ENCODE measurements at regions of chr16 and their contacts with region 1.

Region 1: DNA sequence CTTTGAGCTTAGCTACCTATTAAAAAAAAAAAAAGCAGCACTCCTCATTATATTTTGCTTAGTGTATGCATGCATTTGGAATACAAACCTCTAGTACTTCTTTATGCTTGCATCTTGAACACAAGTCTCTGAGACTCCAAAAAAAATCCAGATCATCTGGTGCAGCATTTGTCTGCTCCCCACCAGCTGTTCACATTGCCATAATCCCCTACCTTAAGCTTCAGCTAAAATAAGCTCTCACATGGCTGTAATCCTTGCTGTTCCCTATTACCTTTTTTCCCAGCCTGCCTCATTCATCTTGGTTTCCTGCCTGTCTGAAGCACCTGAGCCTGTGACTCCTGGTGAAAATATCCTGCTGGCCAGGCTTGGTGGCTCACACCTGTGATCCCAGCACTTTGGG is 7.5 kb upstream of the NFATC2IP start:
- DNase-seq: no peak
- ATAC-seq: no peak
- H3K4me3 ChIP-seq: no peak overlapping the region
- H3K4me3 Mint-ChIP-seq: no peak overlapping the region
- H3K27ac ChIP-seq: no peak overlapping the region
- H3K27ac Mint-ChIP-seq: no peak overlapping the region
- H3K4me1 ChIP-seq: peaks cover 6% of the 10 kb centered on the region
- H3K4me1 Mint-ChIP-seq: peaks cover 7% of the 10 kb centered on the region
- H3K27me3 ChIP-seq: no peaks in the 10 kb centered on the region
- H3K27me3 Mint-ChIP-seq: no peaks in the 10 kb centered on the region
- CTCF ChIP-seq: no peak

Region 2: GRCh38 chr16:28553776-28554633 is 389.3 kb before region 1 on chr16 and contains the start of gene SGF29:
- CTCF ChIA-PET with region 1: no interaction called
- POLR2A ChIA-PET with region 1: no interaction called
- intact Hi-C with region 1: loop called in 1 of 2 experiments (anchors 2 kb)
- DNase-seq: peak; percentile 86 to 97 (median 93)
- ATAC-seq: peak; percentile 93
- H3K4me3 ChIP-seq: peak within 1 kb of the TSS; percentile 87 to 99
- H3K4me3 Mint-ChIP-seq: peak within 1 kb of the TSS; percentile 92
- H3K27ac ChIP-seq: peak within 1 kb of the TSS; percentile 95 to 98
- H3K27ac Mint-ChIP-seq: peak within 1 kb of the TSS; percentile 98
- H3K4me1 ChIP-seq: peaks cover 18% of the 10 kb centered on the region
- H3K4me1 Mint-ChIP-seq: peaks cover 36% of the 10 kb centered on the region
- H3K27me3 ChIP-seq: no peaks in the 10 kb centered on the region
- H3K27me3 Mint-ChIP-seq: no peaks in the 10 kb centered on the region
- CTCF ChIP-seq: no peak
- total RNA-seq, gene SGF29: 41.1 to 44.5 TPM

Region 3: DNA sequence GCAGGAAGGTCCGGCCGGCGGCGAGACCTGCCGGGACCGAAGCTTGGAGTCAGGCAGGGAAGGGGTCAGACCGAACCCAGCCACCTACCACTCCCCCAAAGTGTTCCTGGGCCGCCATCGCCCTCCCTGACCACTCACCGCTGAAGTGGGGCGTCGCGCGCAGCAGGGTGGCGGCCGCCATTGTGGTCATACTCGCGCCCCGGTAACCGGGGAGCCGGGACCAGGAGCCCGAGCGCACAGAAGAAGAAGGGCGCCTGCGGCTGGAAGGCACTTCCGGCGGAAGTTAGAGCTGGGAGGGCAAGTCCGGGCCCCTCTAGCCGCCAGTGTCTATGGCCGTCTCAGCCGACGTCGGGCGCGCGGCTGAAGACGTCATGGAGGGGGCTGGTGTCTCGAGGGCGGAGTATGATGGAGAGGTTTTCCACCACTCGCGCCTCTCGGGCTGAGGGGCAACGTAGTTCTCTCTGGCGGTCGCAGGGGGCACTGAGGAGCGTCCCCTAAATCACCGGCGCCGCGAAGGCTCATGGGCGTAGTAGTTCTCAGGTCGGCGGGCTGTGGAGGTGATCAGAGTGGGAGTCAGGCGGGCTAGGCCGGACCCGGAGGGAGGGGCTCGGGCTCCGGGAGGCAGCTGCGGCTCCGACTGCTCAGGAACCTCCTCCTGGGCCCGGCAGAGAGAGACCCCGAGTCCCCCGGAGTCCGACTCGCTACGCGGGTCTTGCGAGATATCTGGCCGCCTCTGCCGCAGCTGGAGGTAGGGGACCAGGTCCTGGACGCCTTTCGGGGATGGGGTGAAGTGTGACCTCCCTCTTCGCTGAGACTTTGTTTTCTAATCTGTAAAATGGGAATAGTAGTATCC is 97.0 kb before region 1 on chr16 and contains the start of gene TUFM:
- CTCF ChIA-PET with region 1: interaction called, 4 read pairs
- POLR2A ChIA-PET with region 1: no interaction called
- intact Hi-C with region 1: loop called in 1 of 2 experiments (anchors 1 kb)
- DNase-seq: peak; percentile 96 to 99 (median 98)
- ATAC-seq: peak; percentile 96
- H3K4me3 ChIP-seq: peak within 1 kb of the TSS; percentile 83 to 100
- H3K4me3 Mint-ChIP-seq: peak within 1 kb of the TSS; percentile 91
- H3K27ac ChIP-seq: peak within 1 kb of the TSS; percentile 78 to 93
- H3K27ac Mint-ChIP-seq: peak within 1 kb of the TSS; percentile 94
- H3K4me1 ChIP-seq: peaks cover 23% of the 10 kb centered on the region
- H3K4me1 Mint-ChIP-seq: peaks cover 32% of the 10 kb centered on the region
- H3K27me3 ChIP-seq: no peaks in the 10 kb centered on the region
- H3K27me3 Mint-ChIP-seq: no peaks in the 10 kb centered on the region
- CTCF ChIP-seq: peak; percentile 75
- total RNA-seq, gene TUFM: 111 to 119 TPM

Region 4: GRCh38 chr16:28863929-28864793 is 79.1 kb before region 1 on chr16:
- CTCF ChIA-PET with region 1: interaction called, 17 read pairs
- POLR2A ChIA-PET with region 1: interaction called, 10 read pairs
- intact Hi-C with region 1: no loop called
- DNase-seq: peak in 4 of 9 experiments; percentile 20 to 70 (median 60)
- ATAC-seq: no peak
- H3K4me3 ChIP-seq: peak overlapping the region; percentile 97 to 100
- H3K4me3 Mint-ChIP-seq: peak overlapping the region; percentile 99
- H3K27ac ChIP-seq: peak overlapping the region; percentile 84 to 97
- H3K27ac Mint-ChIP-seq: peak overlapping the region; percentile 99
- H3K4me1 ChIP-seq: peaks cover 16% of the 10 kb centered on the region
- H3K4me1 Mint-ChIP-seq: peaks cover 33% of the 10 kb centered on the region
- H3K27me3 ChIP-seq: no peaks in the 10 kb centered on the region
- H3K27me3 Mint-ChIP-seq: no peaks in the 10 kb centered on the region
- CTCF ChIP-seq: no peak

Region 5: GRCh38 chr16:28873536-28874201 is 69.6 kb before region 1 on chr16:
- CTCF ChIA-PET with region 1: interaction called, 32 read pairs
- POLR2A ChIA-PET with region 1: no interaction called
- intact Hi-C with region 1: loop called (anchors 1 to 2 kb)
- DNase-seq: peak; percentile 37 to 73 (median 64)
- ATAC-seq: peak; percentile 96
- H3K4me3 ChIP-seq: no peak overlapping the region
- H3K4me3 Mint-ChIP-seq: no peak overlapping the region
- H3K27ac ChIP-seq: no peak overlapping the region
- H3K27ac Mint-ChIP-seq: no peak overlapping the region
- H3K4me1 ChIP-seq: no peaks in the 10 kb centered on the region
- H3K4me1 Mint-ChIP-seq: peaks cover 1% of the 10 kb centered on the region
- H3K27me3 ChIP-seq: no peaks in the 10 kb centered on the region
- H3K27me3 Mint-ChIP-seq: no peaks in the 10 kb centered on the region
- CTCF ChIP-seq: peak; percentile 66

Region 6: DNA sequence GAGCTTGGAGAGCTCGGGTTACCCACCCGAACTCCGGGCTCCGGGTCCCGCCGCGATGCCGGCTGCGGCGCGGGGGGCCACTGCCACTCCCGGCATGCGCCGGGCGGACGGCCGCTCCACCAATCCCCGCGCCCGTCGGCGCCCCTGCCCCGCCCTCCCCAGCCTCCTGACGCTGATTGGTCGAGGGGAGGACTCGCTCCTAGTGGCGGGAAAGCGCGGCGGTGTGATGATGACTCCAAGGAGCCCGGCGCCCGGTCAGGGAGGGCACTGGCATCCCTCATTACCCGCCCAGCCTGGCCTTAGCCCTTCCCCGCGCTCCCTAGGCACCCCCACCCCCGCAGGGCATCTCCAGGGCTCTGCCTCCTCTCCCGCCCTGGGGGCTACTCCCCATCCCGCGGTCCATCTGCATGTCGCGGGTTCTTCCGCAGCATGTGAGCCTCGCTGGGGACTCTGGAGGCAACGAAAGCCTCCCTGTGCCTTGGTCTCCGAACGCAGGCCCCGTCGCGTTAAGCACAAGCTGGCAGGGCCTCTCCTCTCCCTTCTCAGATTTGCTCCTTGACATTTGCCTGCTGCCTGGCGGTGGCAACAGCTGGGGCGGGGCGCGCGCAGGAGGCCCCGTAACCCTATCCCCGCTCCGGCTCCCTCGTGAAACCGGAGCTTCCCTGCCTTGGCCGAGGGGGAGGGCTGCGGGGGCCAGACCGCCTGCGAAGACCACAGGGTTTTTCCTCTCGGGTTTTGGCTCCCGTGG is 63.3 kb before region 1 on chr16:
- CTCF ChIA-PET with region 1: interaction called, 32 read pairs
- POLR2A ChIA-PET with region 1: interaction called, 5 read pairs
- intact Hi-C with region 1: loop called in 1 of 2 experiments (anchors 1 kb)
- DNase-seq: peak; percentile 78 to 91 (median 89)
- ATAC-seq: peak; percentile 97
- H3K4me3 ChIP-seq: peak overlapping the region; percentile 85 to 88
- H3K4me3 Mint-ChIP-seq: peak overlapping the region; percentile 86
- H3K27ac ChIP-seq: peak overlapping the region in 1 of 2 experiments; percentile 39
- H3K27ac Mint-ChIP-seq: no peak overlapping the region
- H3K4me1 ChIP-seq: peaks cover 9% of the 10 kb centered on the region
- H3K4me1 Mint-ChIP-seq: peaks cover 16% of the 10 kb centered on the region
- H3K27me3 ChIP-seq: no peaks in the 10 kb centered on the region
- H3K27me3 Mint-ChIP-seq: peaks cover 14% of the 10 kb centered on the region
- CTCF ChIP-seq: no peak

Region 7: DNA sequence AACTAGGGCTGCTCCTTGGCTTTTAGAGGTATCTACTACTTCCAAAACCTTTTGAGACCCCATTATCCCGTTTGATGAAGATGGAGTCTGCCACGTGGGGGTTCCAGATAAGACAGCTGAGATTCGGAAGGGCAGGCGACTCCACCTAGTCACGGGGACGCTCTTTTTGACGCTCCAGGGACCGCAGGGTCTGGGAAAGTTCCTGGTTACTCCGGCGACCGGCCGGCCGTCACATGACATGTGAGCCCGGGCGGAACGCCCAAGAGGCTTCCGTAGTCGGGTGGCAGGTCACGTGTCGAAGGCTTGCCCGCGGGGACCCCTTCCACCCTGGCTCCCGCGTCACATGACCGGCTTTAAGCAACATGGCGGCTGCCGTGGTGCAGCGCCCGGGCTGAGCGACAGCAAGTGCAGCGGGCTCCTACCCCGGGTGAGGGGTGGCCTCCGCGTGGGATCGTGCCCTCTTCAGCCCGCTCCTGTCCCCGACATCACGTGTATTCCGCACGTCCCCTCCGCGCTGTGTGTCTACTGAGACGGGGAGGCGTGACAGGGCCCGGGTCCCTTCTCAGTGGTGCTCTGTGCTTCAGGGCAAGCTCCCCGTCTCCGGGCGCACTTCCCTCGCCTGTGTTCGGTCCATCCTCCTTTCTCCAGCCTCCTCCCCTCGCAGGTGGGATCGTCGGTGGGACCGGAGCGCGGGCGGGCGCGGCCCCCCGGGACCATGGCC is 31.3 kb after region 1 on chr16 and contains the start of gene SPNS1:
- CTCF ChIA-PET with region 1: interaction called, 10 read pairs
- POLR2A ChIA-PET with region 1: interaction called, 3 read pairs
- intact Hi-C with region 1: no loop called
- DNase-seq: peak; percentile 78 to 95 (median 90)
- ATAC-seq: peak; percentile 87
- H3K4me3 ChIP-seq: peak within 1 kb of the TSS; percentile 68 to 96
- H3K4me3 Mint-ChIP-seq: peak within 1 kb of the TSS; percentile 98
- H3K27ac ChIP-seq: peak within 1 kb of the TSS; percentile 55 to 79
- H3K27ac Mint-ChIP-seq: peak within 1 kb of the TSS; percentile 97
- H3K4me1 ChIP-seq: peaks cover 19% of the 10 kb centered on the region
- H3K4me1 Mint-ChIP-seq: peaks cover 41% of the 10 kb centered on the region
- H3K27me3 ChIP-seq: no peaks in the 10 kb centered on the region
- H3K27me3 Mint-ChIP-seq: no peaks in the 10 kb centered on the region
- CTCF ChIP-seq: no peak
- total RNA-seq, gene SPNS1: 31.7 to 31.8 TPM

Region 8: DNA sequence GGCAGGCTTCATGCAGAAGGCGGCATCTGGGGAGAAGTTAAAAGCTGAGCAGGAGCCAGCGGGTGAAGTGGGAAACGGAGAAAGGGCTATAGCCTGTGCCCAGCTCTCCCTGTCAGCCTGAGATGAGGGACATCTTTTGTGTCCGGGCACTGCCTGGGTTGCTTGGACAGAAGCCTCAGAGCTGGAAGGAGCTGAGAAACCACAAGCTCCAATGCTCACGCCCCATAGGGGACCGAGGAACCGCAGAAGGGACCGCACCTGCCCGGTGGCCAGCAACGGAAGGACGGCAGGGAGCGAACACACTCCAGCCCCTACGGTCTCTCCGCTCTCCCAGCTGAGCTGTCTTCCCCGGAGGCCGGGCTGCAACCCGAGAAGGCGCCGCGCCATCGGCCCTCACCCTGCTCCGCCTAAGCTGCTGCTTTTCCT is 287.4 kb after region 1 on chr16:
- CTCF ChIA-PET with region 1: no interaction called
- POLR2A ChIA-PET with region 1: no interaction called
- intact Hi-C with region 1: no loop called
- DNase-seq: peak in 1 of 9 experiments; percentile 41
- ATAC-seq: no peak
- H3K4me3 ChIP-seq: no peak overlapping the region
- H3K4me3 Mint-ChIP-seq: no peak overlapping the region
- H3K27ac ChIP-seq: no peak overlapping the region
- H3K27ac Mint-ChIP-seq: no peak overlapping the region
- H3K4me1 ChIP-seq: no peaks in the 10 kb centered on the region
- H3K4me1 Mint-ChIP-seq: no peaks in the 10 kb centered on the region
- H3K27me3 ChIP-seq: no peaks in the 10 kb centered on the region
- H3K27me3 Mint-ChIP-seq: no peaks in the 10 kb centered on the region
- CTCF ChIP-seq: no peak

Measured in CD8-positive, alpha-beta T cell (primary cell).